ENCODE measurements at regions of chr3 and their contacts with region 1.

Region 1: GRCh38 chr3:123884203-123884831 is at the start of gene MYLK:
- DNase-seq: peak; percentile 90 to 95
- ATAC-seq: peak; percentile 82
- H3K4me3 ChIP-seq: peak within 1 kb of the TSS; percentile 74 to 90
- H3K27ac ChIP-seq: peak within 1 kb of the TSS; percentile 61 to 68
- H3K4me1 ChIP-seq: peaks cover 0 to 1% of the 10 kb centered on the region in 2 donors
- H3K27me3 ChIP-seq: no peaks in the 10 kb centered on the region
- total RNA-seq, gene MYLK: 484 to 786 TPM

Region 2: GRCh38 chr3:123723522-123724168 is 160.7 kb before region 1 on chr3:
- intact Hi-C with region 1: loop called in 1 of 2 experiments (anchors 5 kb)
- DNase-seq: no peak
- ATAC-seq: no peak
- H3K4me3 ChIP-seq: no peak overlapping the region
- H3K27ac ChIP-seq: peak overlapping the region in 1 of 2 donors; percentile 7
- H3K4me1 ChIP-seq: peaks cover 0 to 2% of the 10 kb centered on the region in 2 donors
- H3K27me3 ChIP-seq: no peaks in the 10 kb centered on the region

Region 3: DNA sequence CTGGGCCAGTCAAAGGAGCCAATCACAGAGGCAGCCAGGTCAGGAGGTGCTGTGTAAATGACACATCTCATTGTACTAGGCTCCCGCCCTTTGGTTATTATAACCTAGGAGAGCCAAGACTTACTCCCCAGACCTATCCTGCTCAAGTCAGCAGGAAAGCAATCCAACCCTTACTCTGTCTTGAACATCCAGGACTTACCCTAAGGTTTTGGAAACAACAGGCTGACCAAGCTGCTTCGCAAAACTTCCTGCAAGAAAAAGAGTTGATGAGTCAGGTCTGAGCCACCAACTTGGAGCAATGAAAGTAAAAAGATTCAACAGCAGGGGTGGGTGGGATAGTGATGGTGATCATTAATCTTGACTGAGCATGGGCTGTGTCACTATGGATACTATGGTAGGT is 144.6 kb before region 1 on chr3:
- intact Hi-C with region 1: loop called in 1 of 2 experiments (anchors 5 kb)
- DNase-seq: no peak
- ATAC-seq: no peak
- H3K4me3 ChIP-seq: no peak overlapping the region
- H3K27ac ChIP-seq: peak overlapping the region in 1 of 2 donors; percentile 45
- H3K4me1 ChIP-seq: no peaks in the 10 kb centered on the region
- H3K27me3 ChIP-seq: no peaks in the 10 kb centered on the region

Region 4: GRCh38 chr3:123757281-123757940 is 126.9 kb before region 1 on chr3:
- intact Hi-C with region 1: loop called in 1 of 2 experiments (anchors 5 kb)
- DNase-seq: peak in 1 of 2 donors; percentile 88
- ATAC-seq: peak; percentile 37
- H3K4me3 ChIP-seq: no peak overlapping the region
- H3K27ac ChIP-seq: peak overlapping the region; percentile 23 to 78
- H3K4me1 ChIP-seq: peaks cover 9 to 16% of the 10 kb centered on the region in 2 donors
- H3K27me3 ChIP-seq: no peaks in the 10 kb centered on the region

Region 5: GRCh38 chr3:123766193-123767019 is 117.9 kb before region 1 on chr3:
- intact Hi-C with region 1: loop called in 1 of 2 experiments (anchors 5 kb)
- DNase-seq: peak; percentile 69 to 82
- ATAC-seq: peak; percentile 75
- H3K4me3 ChIP-seq: no peak overlapping the region
- H3K27ac ChIP-seq: peak overlapping the region; percentile 84 to 87
- H3K4me1 ChIP-seq: peaks cover 0 to 3% of the 10 kb centered on the region in 2 donors
- H3K27me3 ChIP-seq: no peaks in the 10 kb centered on the region

Region 6: DNA sequence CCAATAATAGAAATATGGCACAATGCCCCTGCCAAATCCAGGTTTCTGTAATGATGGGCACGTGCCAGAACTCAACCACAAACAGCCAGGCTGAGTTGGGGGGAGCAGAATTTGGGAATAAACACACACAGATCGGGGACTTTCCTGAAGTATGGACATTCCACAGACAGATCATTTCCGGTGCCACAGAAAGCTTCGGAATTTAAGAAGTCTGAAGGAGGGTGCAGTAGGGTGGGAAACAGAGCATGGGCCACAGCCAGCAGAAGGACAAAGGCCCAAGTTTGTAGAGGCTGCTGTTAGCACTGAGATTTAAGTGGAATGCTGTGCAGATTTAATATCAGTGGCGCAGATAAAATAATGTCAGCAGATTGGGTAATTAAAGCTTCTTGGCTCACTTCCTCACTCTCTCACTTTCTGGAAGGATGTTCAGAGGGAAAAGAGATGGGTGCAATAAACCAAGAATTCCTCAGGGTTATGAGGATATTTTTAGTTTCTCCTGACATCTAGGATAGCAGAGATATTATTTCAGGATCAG is 67.6 kb before region 1 on chr3:
- intact Hi-C with region 1: loop called in 1 of 2 experiments (anchors 5 kb)
- DNase-seq: no peak
- ATAC-seq: peak; percentile 22
- H3K4me3 ChIP-seq: no peak overlapping the region
- H3K27ac ChIP-seq: peak overlapping the region; percentile 61 to 81
- H3K4me1 ChIP-seq: peaks cover 2 to 7% of the 10 kb centered on the region in 2 donors
- H3K27me3 ChIP-seq: no peaks in the 10 kb centered on the region

Region 7: DNA sequence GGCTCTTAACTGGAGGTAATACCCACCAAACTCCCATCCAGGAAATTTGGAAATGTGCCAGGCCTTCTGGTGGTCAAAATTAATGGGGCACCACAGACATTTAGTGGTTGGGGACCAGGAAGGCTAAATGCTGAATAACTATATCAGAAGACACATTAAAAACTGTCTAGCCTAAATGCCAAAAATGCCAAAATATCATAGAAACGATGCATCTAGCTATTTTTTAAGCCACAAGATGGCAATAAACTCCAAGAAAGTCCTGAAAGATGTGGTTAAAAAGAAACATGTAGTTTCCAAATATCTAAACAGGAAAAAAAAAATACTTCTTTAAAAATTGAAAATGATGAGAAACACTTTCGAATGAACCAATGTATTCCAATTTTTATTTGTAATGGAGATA is 56.8 kb after region 1 on chr3:
- intact Hi-C with region 1: no loop called
- DNase-seq: no peak
- ATAC-seq: no peak
- H3K4me3 ChIP-seq: no peak overlapping the region
- H3K27ac ChIP-seq: no peak overlapping the region
- H3K4me1 ChIP-seq: peaks cover 0 to 2% of the 10 kb centered on the region in 2 donors
- H3K27me3 ChIP-seq: no peaks in the 10 kb centered on the region

Region 8: DNA sequence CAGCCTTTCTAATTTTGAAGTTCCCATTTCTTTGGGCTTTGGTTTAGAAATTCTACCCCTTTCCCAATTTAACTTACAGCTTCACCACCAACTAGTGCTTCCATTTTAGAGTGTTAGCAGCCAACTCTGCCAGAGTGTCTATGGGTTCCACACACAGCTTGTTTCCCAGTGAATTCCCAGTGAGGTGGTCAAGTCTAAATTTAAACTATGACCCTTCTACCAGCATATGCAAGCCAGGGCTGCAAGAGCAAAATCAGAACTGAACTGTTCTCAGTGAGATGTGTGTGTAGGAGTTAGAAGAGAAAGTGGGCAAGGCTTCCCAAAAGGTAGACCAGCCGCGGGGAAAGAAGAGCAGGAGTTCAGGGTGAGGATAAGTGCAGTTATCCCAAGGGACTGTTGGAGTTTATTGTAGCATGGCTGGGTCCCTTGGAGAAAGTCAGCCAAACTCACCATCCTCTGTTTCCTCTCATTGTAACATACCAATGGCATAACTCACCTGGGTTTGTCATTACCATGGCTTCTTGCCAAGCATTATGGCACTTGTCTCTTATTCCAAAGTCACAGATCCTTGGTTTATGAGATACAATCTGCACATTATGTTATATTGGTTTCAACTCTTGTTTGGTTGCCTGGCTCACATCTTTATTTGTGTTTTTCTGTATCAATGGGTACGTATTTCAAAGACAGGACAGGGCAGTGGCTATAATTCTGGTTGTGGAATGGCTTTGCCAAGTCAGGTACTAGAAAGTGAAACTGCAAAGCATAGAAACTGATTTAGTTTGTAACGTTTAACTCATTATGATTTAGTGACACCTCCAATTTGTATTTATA is 715.7 kb after region 1 on chr3:
- intact Hi-C with region 1: loop called in 1 of 2 experiments (anchors 5 kb)
- DNase-seq: no peak
- ATAC-seq: no peak
- H3K4me3 ChIP-seq: no peak overlapping the region
- H3K27ac ChIP-seq: peak overlapping the region in 1 of 2 donors; percentile 12
- H3K4me1 ChIP-seq: peaks cover 2 to 3% of the 10 kb centered on the region in 2 donors
- H3K27me3 ChIP-seq: no peaks in the 10 kb centered on the region

Measured in aorta (tissue), 5 donors.